ENCODE measurements at regions of chr20 and their contacts with region 1.

Region 1: DNA sequence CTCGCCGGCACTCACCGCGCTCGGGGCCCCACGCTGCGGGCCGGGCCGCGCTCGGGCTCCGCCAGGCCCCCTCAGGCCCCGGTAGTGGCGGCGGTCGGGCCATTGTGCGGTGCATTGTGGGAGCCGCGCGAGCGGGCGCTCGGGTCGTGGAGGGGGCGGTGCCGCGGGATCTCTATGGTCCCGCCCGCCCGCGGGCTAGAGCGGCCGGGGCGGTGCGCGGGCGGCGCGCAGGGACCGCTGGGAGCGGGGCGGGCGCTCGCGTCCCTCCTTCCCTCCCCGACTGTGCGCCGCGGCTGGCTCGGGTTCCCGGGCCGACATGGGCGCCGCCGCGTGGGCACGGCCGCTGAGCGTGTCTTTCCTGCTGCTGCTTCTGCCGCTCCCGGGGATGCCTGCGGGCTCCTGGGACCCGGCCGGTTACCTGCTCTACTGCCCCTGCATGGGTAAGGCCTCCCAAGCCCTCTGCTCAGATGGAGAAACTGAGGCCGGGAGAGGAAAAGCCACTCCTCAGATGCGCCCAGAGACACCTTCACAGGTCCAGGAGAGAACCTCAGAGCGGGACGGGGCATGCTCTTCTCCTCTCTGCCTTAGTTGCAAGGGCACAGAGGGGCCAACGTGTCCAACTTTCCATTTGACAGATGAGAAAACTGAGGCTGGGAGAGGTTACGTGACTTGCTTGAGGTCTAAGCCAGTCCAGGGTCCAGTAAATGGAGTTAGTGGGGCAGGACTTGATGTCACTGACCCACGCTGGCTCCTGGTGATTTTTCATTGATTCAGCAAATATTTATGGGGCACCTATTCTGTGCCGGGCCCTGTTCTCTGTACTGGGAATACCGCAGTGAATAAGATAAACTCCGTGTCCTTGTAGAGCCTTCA is at the starts of genes PLAGL2 and POFUT1:
- DNase-seq: peak; percentile 90 to 91
- ATAC-seq: peak; percentile 91 to 98 (median 95)
- H3K4me3 ChIP-seq: peak within 1 kb of the TSS; percentile 70 to 100 (median 98)
- H3K27ac ChIP-seq: peak within 1 kb of the TSS; percentile 88 to 99 (median 95)
- H3K4me1 ChIP-seq: peaks cover 22 to 63% (median 52%) of the 10 kb centered on the region in 9 donors
- H3K27me3 ChIP-seq: no peaks in the 10 kb centered on the region
- CTCF ChIP-seq: peak in 5 of 9 donors; percentile 17 to 57 (median 52)
- total RNA-seq, gene PLAGL2: 5.6 to 12.3 (median 7.9) TPM
- total RNA-seq, gene POFUT1: 25.9 to 32.9 (median 27.9) TPM

Region 2: DNA sequence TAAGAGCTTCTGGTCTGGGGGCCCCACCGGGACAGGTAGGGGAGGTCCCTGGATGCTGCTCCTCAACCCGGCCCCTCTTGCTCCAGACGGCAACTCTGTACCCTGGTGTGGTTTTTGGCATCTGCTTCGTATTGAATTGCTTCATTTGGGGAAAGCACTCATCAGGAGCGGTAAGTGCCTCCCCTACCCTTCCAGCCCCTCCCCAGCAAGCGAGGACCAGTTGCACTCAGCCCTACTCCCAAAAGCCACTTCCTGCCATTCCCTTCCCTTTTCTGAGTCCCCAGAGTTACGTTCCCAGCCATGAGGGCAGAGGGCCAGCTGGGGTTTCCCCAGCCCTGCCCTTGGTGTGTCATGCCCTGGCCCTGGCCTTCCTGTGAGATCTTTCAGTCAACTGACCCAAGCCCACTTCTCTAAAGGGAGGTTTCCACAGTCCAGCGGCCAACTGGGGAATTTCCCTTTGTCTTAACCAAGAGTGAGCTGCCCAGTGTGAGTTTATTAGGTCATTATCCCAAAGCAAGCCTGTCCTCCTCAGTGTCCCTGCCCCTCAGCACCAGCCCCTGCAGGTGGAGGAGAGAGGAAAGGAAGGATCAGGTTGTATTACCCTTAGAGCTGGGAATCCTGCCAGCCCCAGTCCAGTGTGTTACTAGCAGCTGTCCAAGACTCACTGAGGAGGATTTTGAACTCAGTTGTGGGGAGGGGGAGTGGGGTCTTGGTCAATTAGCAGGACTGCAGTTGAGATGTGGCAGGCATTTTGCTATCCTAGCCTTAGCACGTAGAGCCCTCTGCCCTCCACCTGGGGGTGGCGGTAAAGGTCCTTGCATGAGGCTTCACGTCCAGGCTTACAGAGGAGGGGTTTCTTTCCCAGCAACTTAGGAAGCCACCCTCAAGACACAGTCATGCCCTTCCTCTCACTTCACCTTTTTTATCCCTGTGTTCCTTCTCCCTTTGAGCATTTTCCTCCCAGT is 52.6 kb before region 1 on chr20:
- intact Hi-C with region 1: loop called in 1 of 10 experiments (anchors 2 kb)
- DNase-seq: peak; percentile 79 to 84
- ATAC-seq: peak; percentile 90 to 96 (median 93)
- H3K4me3 ChIP-seq: no peak overlapping the region
- H3K27ac ChIP-seq: peak overlapping the region in 9 of 10 donors; percentile 28 to 74 (median 60)
- H3K4me1 ChIP-seq: peaks cover 10 to 24% (median 16%) of the 10 kb centered on the region in 9 donors
- H3K27me3 ChIP-seq: no peaks in the 10 kb centered on the region
- CTCF ChIP-seq: peak in 7 of 9 donors; percentile 21 to 60 (median 44)

Region 3: GRCh38 chr20:32285621-32286371 is 77.9 kb after region 1 on chr20:
- intact Hi-C with region 1: loop called in 1 of 10 experiments (anchors 10 kb)
- DNase-seq: peak in 1 of 2 donors; percentile 12
- ATAC-seq: peak; percentile 55 to 82 (median 73)
- H3K4me3 ChIP-seq: peak overlapping the region in 4 of 10 donors; percentile 4 to 8 (median 5)
- H3K27ac ChIP-seq: peak overlapping the region in 9 of 10 donors; percentile 26 to 77 (median 64)
- H3K4me1 ChIP-seq: peaks cover 3 to 43% (median 29%) of the 10 kb centered on the region in 9 donors
- H3K27me3 ChIP-seq: no peaks in the 10 kb centered on the region
- CTCF ChIP-seq: no peak

Region 4: GRCh38 chr20:32357869-32358631 is 150.2 kb after region 1 on chr20 and contains the start of gene ASXL1:
- intact Hi-C with region 1: loop called in 2 of 10 experiments (anchors 10 kb)
- DNase-seq: peak; percentile 98 to 99
- ATAC-seq: peak; percentile 96 to 98 (median 97)
- H3K4me3 ChIP-seq: peak within 1 kb of the TSS; percentile 70 to 94 (median 85)
- H3K27ac ChIP-seq: peak within 1 kb of the TSS; percentile 86 to 99 (median 96)
- H3K4me1 ChIP-seq: peaks cover 3 to 65% (median 41%) of the 10 kb centered on the region in 9 donors
- H3K27me3 ChIP-seq: no peaks in the 10 kb centered on the region
- CTCF ChIP-seq: peak in 1 of 9 donors; percentile 32
- total RNA-seq, gene ASXL1: 23.1 to 39.4 (median 29.4) TPM

Region 5: DNA sequence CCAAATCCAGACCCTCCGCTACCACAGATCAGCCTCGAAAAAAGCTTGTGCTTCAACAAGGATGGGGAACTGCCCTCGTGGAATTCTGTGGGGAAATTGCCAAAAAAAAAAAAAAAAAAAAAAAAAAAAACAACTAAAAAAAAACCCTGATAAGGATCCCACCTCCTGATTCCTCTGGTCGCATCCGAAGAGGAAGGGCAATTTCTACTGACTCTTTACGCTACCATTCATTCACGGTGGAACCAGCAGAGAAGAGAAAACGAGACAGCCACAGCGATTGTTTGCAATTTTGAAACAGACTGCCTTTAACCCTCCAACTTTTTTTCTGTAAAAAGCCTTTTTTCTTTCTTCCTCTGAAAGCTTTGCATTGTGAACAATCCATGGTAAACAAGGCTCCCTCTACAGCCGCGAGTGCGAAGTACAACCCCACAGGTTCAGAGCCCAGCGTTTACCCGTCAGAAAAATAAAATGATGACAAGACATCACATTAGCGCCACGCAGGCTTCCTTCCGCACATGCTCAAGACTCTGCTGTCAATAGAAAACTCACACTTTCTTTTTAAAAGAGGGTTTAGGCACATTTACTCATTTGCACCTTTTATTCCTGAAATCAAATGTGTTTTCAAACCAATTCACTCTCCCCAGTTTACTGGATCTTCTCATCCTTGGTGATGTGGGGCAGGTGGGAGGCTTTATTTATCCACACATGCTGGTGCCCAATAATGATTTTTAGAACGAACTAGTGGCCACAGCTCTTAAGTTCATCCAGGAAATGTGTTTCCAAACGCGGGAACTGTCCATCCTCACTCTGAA is 277.3 kb after region 1 on chr20:
- intact Hi-C with region 1: loop called in 1 of 10 experiments (anchors 5 kb)
- DNase-seq: peak; percentile 70 to 78
- ATAC-seq: peak in 7 of 8 donors; percentile 23 to 72 (median 65)
- H3K4me3 ChIP-seq: peak overlapping the region; percentile 48 to 92 (median 76)
- H3K27ac ChIP-seq: peak overlapping the region in 9 of 10 donors; percentile 44 to 91 (median 84)
- H3K4me1 ChIP-seq: peaks cover 4 to 45% (median 37%) of the 10 kb centered on the region in 9 donors
- H3K27me3 ChIP-seq: no peaks in the 10 kb centered on the region
- CTCF ChIP-seq: peak; percentile 62 to 89 (median 78)

Measured in heart right ventricle (tissue), 16 donors.